ENCODE measurements at regions of chr2 and their contacts with region 1.

Region 1: DNA sequence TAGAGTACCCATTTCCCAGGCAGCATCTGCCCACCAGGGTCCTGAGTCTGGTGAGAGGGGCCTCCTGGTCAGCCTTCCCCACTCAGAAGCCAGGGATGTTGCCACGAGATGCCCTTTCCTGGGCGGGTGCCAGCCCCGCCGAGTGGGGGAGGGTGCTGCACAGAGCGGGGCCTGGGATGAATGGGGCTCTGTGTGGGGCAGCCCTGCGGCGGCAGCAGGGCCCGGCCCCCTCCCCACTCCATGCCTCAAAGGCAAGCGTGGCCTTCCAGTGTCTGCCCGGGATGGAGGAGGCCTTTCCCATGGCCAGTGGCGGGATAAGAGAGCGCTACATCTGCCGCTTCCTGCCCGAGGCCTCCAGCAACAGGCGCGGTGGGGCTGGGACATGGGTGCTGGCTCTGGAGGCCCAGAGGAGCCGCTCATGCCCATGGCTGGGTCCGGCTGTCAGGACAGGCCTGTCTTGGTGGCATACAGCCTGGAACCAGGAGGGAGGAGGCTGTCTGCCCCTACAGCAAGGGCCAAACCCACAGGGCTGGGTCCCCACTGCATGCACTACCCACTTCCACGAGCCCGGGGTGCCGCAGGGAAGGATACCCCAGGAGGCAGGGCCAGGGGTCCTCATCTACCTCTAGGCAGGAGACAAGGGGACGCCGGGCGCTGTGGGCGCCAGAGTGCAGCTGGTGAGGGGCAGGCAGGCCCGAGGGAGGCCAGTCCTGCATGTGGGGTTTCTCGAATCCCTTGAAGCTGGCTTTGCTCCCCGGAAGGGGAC is 95.3 kb upstream of the GPC1 start:
- DNase-seq: no peak
- H3K4me3 ChIP-seq: no peak overlapping the region
- H3K27ac ChIP-seq: no peak overlapping the region
- H3K4me1 ChIP-seq: no peaks in the 10 kb centered on the region
- H3K27me3 ChIP-seq: no peaks in the 10 kb centered on the region
- CTCF ChIP-seq: no peak

Region 2: GRCh38 chr2:239944694-239945551 is 395.3 kb before region 1 on chr2:
- dilution Hi-C with region 1: no loop called
- DNase-seq: no peak
- H3K4me3 ChIP-seq: no peak overlapping the region
- H3K27ac ChIP-seq: no peak overlapping the region
- H3K4me1 ChIP-seq: no peaks in the 10 kb centered on the region
- H3K27me3 ChIP-seq: no peaks in the 10 kb centered on the region
- CTCF ChIP-seq: no peak

Region 3: DNA sequence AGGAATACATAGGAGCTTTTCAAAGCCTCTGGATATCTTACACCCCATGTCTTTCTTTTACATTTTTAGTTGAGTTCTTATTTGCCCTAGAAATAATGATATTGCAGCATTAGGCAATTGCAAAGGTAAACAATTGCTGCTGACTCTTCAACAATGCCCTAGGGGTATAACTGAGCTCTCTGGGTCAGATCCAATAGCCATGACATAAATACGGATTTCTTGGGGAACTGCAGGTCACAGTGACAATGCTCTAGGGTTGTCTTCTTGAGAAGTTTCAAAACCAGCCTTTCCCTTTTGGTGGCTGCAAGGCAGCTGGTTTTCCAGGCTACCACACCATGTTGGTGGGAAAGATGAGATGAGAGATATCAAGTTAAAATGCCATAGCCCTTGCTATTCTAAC is 270.3 kb before region 1 on chr2:
- dilution Hi-C with region 1: no loop called
- DNase-seq: no peak
- H3K4me3 ChIP-seq: no peak overlapping the region
- H3K27ac ChIP-seq: no peak overlapping the region
- H3K4me1 ChIP-seq: no peaks in the 10 kb centered on the region
- H3K27me3 ChIP-seq: peaks cover 3% of the 10 kb centered on the region
- CTCF ChIP-seq: no peak

Region 4: DNA sequence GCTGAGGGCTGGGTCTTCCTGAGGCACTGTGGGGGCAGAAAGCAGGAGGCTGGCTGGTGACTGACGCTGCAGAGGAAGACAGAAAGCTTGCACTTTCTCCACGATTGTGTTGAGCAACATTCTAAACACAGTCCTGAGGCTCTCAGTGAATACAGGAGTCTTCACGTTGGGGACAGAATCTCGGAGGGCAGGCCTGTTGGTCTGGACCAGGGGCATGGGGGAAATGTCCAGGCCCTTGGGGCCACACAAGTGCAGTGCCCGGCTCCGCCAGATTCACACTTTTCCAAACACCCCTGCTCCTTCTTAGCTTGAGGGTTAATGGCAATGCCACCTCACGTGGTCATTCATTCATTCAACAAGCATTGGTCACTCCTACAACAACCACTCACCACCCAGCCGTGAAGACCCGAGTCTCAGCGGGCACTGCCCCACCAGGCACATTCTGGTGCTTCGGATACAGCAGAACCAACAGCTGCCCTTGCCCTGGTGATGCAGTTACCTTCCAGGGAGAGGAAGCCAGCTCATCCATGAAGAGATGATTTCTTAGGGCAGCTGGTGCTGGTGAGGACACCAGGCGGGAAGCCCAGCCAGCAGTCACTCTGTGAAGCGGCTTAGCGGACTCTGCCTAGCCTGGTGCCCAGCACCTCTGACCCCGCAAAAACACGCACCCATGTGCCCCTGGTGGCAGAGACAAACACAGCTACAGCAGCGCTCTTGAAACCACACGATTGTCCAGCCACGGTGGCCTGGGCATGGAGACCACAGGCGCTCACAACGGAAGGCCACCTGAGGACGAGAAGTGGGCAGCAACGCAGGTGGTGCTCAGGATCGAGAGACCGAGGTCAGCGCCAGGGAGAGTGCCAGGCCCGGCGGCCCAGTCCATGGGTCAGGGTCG is 84.4 kb after region 1 on chr2:
- dilution Hi-C with region 1: loop called (anchors 5 kb)
- DNase-seq: no peak
- H3K4me3 ChIP-seq: no peak overlapping the region
- H3K27ac ChIP-seq: no peak overlapping the region
- H3K4me1 ChIP-seq: peaks cover 4% of the 10 kb centered on the region
- H3K27me3 ChIP-seq: peaks cover 7% of the 10 kb centered on the region
- CTCF ChIP-seq: no peak

Region 5: DNA sequence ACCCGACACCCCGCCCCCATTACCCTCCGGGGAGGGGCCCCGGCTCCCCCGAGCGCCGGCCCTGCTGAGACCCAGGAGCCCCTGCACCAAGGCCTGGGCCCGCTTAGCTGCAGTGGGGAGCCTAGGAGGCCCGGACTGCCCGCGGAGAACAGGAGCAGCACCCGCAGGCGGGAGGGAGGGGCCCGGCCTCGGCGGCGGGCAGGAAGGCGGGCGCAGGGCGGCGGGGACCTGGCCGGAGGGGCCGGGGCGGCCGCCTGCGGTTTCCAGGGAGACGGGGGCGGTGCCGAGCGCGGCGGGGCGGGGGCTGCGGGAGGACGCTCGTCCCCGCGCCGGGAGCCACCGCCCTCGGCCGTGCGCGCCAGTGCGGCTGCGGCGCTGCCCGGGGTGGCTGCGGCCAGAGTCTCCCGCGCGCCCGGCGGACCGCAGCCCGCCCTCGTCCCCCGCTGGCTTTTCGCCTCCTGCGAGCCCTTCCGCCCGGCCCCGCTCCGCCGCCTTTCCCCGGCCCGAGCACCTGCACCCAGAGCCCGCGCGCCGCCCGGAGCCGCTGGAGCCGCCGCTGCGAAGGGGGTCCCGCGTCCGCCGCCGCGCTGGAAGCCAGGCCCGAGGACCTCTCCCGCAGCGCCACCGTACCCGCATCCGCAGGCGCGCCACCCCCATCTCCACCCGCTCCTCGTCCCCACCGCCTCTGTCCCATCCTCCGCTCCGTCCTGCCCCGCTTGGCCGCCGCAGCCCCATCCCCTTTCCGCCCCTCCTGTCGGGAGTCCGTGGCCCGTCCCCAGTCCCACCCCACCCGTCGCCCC is 112.5 kb after region 1 on chr2:
- dilution Hi-C with region 1: no loop called
- DNase-seq: no peak
- H3K4me3 ChIP-seq: peak overlapping the region; percentile 27 to 49 (median 43)
- H3K27ac ChIP-seq: no peak overlapping the region
- H3K4me1 ChIP-seq: peaks cover 55% of the 10 kb centered on the region
- H3K27me3 ChIP-seq: peaks cover 5% of the 10 kb centered on the region
- CTCF ChIP-seq: no peak

Region 6: DNA sequence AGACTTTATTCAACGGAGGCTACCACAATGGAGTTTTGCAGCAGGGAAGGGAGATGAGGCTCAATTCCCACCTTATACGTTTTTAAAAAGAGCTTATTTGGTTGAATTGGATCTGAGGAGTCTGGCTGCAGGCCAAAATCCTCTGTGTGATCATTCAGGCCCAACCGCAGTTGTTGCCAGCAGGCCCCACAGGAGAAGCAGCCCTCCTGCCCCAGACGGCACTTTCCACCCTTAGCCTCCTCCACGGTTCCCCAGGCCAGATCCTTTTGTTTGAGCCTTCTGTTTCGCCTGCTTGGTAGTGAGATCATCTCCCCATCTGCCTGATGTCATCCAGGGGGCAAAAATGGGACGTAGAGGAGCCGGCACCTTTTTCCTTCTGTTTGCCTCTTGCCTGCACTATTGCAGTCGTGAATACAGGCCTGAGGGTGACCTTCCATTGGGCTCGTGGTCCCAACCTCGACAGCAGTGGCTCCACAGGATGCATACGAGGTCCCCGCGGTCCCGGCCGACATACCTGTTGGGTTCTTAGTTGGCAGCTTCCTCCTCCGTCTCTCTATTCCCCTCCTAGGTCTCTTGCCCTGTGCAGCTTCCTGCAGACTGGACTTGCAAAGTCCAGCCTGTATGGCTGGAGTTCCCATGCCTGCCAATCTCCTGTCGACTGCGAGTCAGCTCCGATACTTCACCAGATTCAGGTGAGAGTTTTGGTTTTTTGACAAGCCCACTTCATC is 275.8 kb after region 1 on chr2:
- dilution Hi-C with region 1: no loop called
- DNase-seq: no peak
- H3K4me3 ChIP-seq: no peak overlapping the region
- H3K27ac ChIP-seq: no peak overlapping the region
- H3K4me1 ChIP-seq: no peaks in the 10 kb centered on the region
- H3K27me3 ChIP-seq: no peaks in the 10 kb centered on the region
- CTCF ChIP-seq: no peak

Measured in keratinocyte (primary cell).